Naive thymus-derived CD4-positive, alpha-beta T cell (primary cell): ENCODE measurements at regions of chr15 and their contacts with region 1.

Region 1: GRCh38 chr15:85707519-85708338 is 87.0 kb downstream of the KLHL25 start:
- DNase-seq: peak in 1 of 9 donors; percentile 57
- ATAC-seq: peak; percentile 35
- H3K4me3 ChIP-seq: peak overlapping the region; percentile 44
- H3K4me3 Mint-ChIP-seq: peak overlapping the region; percentile 77 to 93 (median 89)
- H3K27ac ChIP-seq: peak overlapping the region; percentile 84
- H3K27ac Mint-ChIP-seq: peak overlapping the region; percentile 94 to 100 (median 98)
- H3K4me1 ChIP-seq: peaks cover 50 to 66% of the 10 kb centered on the region in 2 donors
- H3K4me1 Mint-ChIP-seq: peaks cover 48 to 89% (median 84%) of the 10 kb centered on the region in 7 donors
- H3K27me3 ChIP-seq: no peaks in the 10 kb centered on the region
- H3K27me3 Mint-ChIP-seq: no peaks in the 10 kb centered on the region

Region 2: DNA sequence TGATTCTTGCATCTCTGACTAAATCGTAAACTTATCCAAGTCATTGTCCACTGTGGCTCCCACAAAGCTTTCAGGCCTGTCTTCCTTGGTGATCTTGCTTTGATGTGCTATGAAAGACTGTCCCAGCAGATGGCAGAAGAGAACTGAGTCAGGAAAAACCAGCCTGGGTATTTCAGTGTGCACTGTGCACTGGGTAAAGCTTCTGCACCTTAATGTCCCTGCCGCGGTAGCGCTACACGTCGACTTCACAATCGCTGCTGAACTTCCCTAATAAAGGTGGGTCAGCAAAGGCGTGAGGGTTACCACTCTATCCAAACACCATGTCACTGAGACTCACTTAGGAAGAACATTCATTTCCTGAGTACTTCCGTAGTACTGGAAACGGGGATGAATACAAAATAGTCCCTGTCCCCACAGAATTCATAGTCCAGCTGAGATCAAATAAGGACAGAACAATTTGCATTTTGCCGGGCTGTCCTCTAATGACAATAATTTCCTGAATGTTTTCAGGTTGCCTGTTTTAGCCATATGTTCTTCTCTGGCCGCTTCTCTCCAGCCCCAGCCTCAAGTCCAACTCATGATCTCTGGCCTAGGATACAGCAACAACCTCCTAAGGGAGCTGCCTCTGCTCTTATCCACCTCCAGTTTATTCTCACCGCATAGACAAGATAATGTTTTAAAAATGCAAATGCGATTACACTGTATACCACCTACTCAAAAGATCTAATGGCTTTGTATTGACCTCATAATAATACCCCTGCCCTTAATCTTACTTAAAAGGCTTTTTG is 410.9 kb before region 1 on chr15:
- CTCF ChIA-PET with region 1: no interaction called
- POLR2A ChIA-PET with region 1: no interaction called
- intact Hi-C with region 1: loop called in 1 of 2 experiments (anchors 5 kb)
- DNase-seq: peak; percentile 19 to 79 (median 71)
- ATAC-seq: peak; percentile 98
- H3K4me3 ChIP-seq: peak overlapping the region; percentile 20
- H3K4me3 Mint-ChIP-seq: peak overlapping the region; percentile 5 to 78 (median 60)
- H3K27ac ChIP-seq: no peak overlapping the region
- H3K27ac Mint-ChIP-seq: peak overlapping the region in 2 of 9 donors; percentile 12 to 62
- H3K4me1 ChIP-seq: no peaks in the 10 kb centered on the region
- H3K4me1 Mint-ChIP-seq: peaks cover 7 to 22% (median 14%) of the 10 kb centered on the region in 7 donors
- H3K27me3 ChIP-seq: no peaks in the 10 kb centered on the region
- H3K27me3 Mint-ChIP-seq: peaks cover 0 to 1% (median 0%) of the 10 kb centered on the region in 5 donors

Region 3: DNA sequence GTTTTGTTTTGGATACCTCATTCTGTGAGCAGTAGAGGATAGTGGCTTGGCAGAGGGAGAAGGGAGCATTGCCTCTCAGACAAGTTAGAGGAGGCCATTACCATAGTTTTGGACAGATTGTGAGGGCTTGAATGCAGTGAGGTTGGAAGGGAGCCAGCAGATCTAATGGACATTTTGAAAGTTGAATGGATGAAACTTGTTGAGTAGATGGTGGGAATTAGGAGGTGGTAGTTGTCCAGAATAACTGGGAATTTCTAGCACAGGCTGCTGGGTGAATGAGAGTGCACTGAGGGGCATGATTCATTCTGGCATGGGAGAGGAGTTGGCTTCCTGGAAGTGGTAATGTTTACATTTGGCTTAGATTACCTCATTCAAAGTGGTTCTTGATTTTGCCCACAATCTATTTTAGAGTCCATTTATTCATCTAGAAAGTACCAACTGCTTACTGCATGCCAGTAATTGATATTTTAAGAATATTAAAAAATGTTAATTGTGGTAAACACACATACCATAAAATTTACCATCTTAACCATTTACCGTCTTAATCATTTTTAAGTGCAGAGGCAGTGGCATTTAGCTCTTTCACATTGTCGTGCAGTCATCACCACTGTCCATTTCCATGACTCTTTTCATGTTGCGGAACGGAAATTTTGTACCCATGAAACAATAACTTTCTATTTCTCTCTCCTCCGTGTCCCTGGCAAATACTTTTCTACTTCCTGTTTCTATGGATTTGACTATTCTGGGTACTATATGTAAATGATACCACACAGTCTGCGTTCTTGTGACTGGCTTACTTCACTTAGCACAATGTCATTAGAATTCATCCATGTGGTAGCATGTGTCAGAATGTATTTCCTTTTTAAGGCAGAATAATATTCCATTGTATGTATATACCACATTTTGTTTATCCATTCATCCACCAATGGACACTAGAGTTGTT is 299.7 kb before region 1 on chr15:
- CTCF ChIA-PET with region 1: no interaction called
- POLR2A ChIA-PET with region 1: no interaction called
- intact Hi-C with region 1: loop called in 1 of 2 experiments (anchors 10 kb)
- DNase-seq: peak in 2 of 9 donors; percentile 23 to 27
- ATAC-seq: peak; percentile 81
- H3K4me3 ChIP-seq: no peak overlapping the region
- H3K4me3 Mint-ChIP-seq: peak overlapping the region; percentile 0 to 81 (median 46)
- H3K27ac ChIP-seq: no peak overlapping the region
- H3K27ac Mint-ChIP-seq: peak overlapping the region; percentile 8 to 92 (median 83)
- H3K4me1 ChIP-seq: peaks cover 24 to 40% of the 10 kb centered on the region in 2 donors
- H3K4me1 Mint-ChIP-seq: peaks cover 43 to 91% (median 73%) of the 10 kb centered on the region in 7 donors
- H3K27me3 ChIP-seq: no peaks in the 10 kb centered on the region
- H3K27me3 Mint-ChIP-seq: no peaks in the 10 kb centered on the region

Region 4: DNA sequence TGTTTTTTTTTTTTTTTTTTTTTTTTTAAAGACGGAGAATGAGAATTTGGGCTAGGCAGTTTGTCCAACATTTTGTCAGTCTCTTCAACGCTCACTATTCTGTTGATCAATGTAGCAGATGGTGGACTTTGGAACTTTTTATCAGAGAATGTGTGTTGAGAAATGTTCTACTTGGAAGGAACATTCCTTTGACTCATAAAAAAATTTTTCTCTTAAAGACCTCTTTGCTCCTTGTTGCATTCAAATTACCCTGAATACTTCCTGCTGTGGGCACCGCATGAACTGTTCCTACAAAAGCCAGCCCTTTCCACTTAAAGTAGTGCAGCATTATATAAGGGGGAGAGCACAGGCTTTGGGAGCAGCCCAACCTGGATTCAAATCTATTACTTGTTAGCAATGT is 144.4 kb before region 1 on chr15:
- CTCF ChIA-PET with region 1: no interaction called
- POLR2A ChIA-PET with region 1: no interaction called
- intact Hi-C with region 1: no loop called
- DNase-seq: no peak
- ATAC-seq: no peak
- H3K4me3 ChIP-seq: no peak overlapping the region
- H3K4me3 Mint-ChIP-seq: no peak overlapping the region
- H3K27ac ChIP-seq: no peak overlapping the region
- H3K27ac Mint-ChIP-seq: no peak overlapping the region
- H3K4me1 ChIP-seq: peaks cover 3 to 5% of the 10 kb centered on the region in 2 donors
- H3K4me1 Mint-ChIP-seq: peaks cover 9 to 33% (median 13%) of the 10 kb centered on the region in 7 donors
- H3K27me3 ChIP-seq: no peaks in the 10 kb centered on the region
- H3K27me3 Mint-ChIP-seq: no peaks in the 10 kb centered on the region

Region 5: GRCh38 chr15:85618956-85619491 is 88.7 kb before region 1 on chr15:
- CTCF ChIA-PET with region 1: no interaction called
- POLR2A ChIA-PET with region 1: no interaction called
- intact Hi-C with region 1: loop called in 1 of 2 experiments (anchors 1 kb)
- DNase-seq: peak in 6 of 9 donors; percentile 13 to 68 (median 24)
- ATAC-seq: peak; percentile 77
- H3K4me3 ChIP-seq: peak overlapping the region; percentile 3
- H3K4me3 Mint-ChIP-seq: no peak overlapping the region
- H3K27ac ChIP-seq: peak overlapping the region; percentile 6
- H3K27ac Mint-ChIP-seq: no peak overlapping the region
- H3K4me1 ChIP-seq: peaks cover 29 to 38% of the 10 kb centered on the region in 2 donors
- H3K4me1 Mint-ChIP-seq: peaks cover 14 to 41% (median 26%) of the 10 kb centered on the region in 7 donors
- H3K27me3 ChIP-seq: no peaks in the 10 kb centered on the region
- H3K27me3 Mint-ChIP-seq: no peaks in the 10 kb centered on the region

Region 6: GRCh38 chr15:85646538-85647091 is 61.1 kb before region 1 on chr15:
- CTCF ChIA-PET with region 1: no interaction called
- POLR2A ChIA-PET with region 1: interaction called, 4 read pairs
- intact Hi-C with region 1: loop called in 1 of 2 experiments (anchors 2 kb)
- DNase-seq: peak in 1 of 9 donors; percentile 35
- ATAC-seq: peak; percentile 78
- H3K4me3 ChIP-seq: no peak overlapping the region
- H3K4me3 Mint-ChIP-seq: peak overlapping the region in 2 of 10 donors; percentile 21 to 51
- H3K27ac ChIP-seq: no peak overlapping the region
- H3K27ac Mint-ChIP-seq: peak overlapping the region in 6 of 9 donors; percentile 10 to 81 (median 48)
- H3K4me1 ChIP-seq: peaks cover 8 to 35% of the 10 kb centered on the region in 2 donors
- H3K4me1 Mint-ChIP-seq: peaks cover 28 to 45% (median 38%) of the 10 kb centered on the region in 7 donors
- H3K27me3 ChIP-seq: no peaks in the 10 kb centered on the region
- H3K27me3 Mint-ChIP-seq: no peaks in the 10 kb centered on the region

Region 7: GRCh38 chr15:85689729-85690128 is 18.0 kb before region 1 on chr15:
- CTCF ChIA-PET with region 1: no interaction called
- POLR2A ChIA-PET with region 1: interaction called, 50 read pairs
- intact Hi-C with region 1: loop called (anchors 1 kb)
- DNase-seq: peak; percentile 44 to 78 (median 71)
- ATAC-seq: peak; percentile 85
- H3K4me3 ChIP-seq: peak overlapping the region; percentile 83
- H3K4me3 Mint-ChIP-seq: peak overlapping the region; percentile 90 to 99 (median 98)
- H3K27ac ChIP-seq: peak overlapping the region; percentile 88
- H3K27ac Mint-ChIP-seq: peak overlapping the region; percentile 92 to 99 (median 98)
- H3K4me1 ChIP-seq: peaks cover 45 to 49% of the 10 kb centered on the region in 2 donors
- H3K4me1 Mint-ChIP-seq: peaks cover 30 to 87% (median 76%) of the 10 kb centered on the region in 7 donors
- H3K27me3 ChIP-seq: no peaks in the 10 kb centered on the region
- H3K27me3 Mint-ChIP-seq: no peaks in the 10 kb centered on the region

Region 8: DNA sequence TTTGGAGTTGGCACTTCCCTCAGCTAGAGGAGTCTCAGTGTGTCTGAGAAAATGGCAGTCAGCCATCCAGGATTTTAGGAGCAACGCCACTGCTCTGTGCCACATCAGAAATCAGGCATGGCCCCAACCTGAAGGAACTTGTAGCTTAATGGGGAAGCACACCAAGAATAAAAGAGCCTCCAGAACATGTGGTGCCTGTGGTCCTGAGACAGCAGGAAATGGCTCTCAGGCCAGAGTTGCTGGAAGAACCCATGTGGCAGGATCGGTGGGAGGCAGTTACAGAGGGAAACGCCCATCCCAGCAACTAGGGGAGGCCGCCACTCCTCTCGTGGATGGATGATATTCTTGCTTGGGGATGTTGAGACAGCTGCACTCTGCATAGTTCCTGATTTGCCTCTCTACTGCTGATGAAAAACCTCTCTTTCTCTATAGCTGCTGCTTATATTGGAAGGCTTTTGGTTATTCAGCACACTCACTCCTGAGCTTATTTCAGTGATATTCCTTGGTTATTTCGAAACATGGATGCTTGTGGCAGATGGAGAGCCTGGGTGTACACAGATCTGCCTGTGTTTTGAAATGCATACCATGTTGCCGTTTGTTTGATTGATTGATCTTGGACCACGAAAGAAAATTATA is 34.6 kb after region 1 on chr15:
- CTCF ChIA-PET with region 1: no interaction called
- POLR2A ChIA-PET with region 1: no interaction called
- intact Hi-C with region 1: no loop called
- DNase-seq: no peak
- ATAC-seq: no peak
- H3K4me3 ChIP-seq: no peak overlapping the region
- H3K4me3 Mint-ChIP-seq: no peak overlapping the region
- H3K27ac ChIP-seq: no peak overlapping the region
- H3K27ac Mint-ChIP-seq: peak overlapping the region in 8 of 9 donors; percentile 9 to 81 (median 48)
- H3K4me1 ChIP-seq: no peaks in the 10 kb centered on the region
- H3K4me1 Mint-ChIP-seq: peaks cover 0 to 5% (median 0%) of the 10 kb centered on the region in 7 donors
- H3K27me3 ChIP-seq: no peaks in the 10 kb centered on the region
- H3K27me3 Mint-ChIP-seq: no peaks in the 10 kb centered on the region

Region 9: DNA sequence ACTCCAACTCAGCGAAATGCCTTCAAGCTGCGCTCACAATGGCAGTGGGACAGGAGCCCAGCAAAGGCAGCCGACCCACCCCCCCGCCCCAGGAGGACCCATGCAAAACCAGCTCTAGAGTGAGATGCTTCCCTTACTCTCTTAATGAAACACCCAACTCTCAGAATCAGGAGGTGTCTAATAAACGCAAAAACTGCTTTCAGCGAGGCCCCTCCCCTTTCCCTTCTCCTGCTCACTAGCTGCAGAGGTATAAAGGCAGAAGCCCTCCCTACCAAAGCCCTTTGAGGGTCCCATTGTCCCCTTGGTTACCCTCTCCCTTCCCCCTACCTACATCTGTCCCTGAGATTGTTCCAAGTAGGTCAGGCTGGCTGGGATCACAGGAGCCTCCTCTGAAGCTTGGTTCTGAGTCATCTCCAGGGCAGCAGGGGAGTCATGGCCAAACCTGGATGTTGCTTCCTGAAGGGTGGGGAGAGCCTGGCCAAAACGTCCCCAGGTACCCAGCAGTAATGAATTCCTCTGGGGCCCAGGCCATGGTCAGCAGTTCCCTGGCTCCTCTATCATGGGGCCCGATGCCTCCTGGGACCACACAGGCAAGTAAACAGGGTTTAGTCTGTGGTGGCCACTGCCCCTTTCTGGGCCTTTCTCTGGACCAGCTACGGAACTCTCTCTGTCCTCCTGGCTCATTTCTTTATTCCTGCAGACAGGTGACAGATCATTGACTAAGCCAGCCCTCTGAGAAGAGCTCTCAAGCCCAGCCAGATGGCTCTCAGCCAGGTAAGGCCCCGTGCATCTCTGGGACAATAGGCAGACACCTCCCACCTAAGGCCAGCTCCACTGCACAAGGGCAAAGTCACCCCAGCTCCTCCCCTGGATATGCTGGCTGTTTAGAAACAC is 78.4 kb after region 1 on chr15:
- CTCF ChIA-PET with region 1: no interaction called
- POLR2A ChIA-PET with region 1: no interaction called
- intact Hi-C with region 1: loop called in 1 of 2 experiments (anchors 2 kb)
- DNase-seq: peak in 1 of 9 donors; percentile 11
- ATAC-seq: peak; percentile 35
- H3K4me3 ChIP-seq: no peak overlapping the region
- H3K4me3 Mint-ChIP-seq: peak overlapping the region; percentile 73 to 87 (median 81)
- H3K27ac ChIP-seq: peak overlapping the region; percentile 61
- H3K27ac Mint-ChIP-seq: peak overlapping the region; percentile 83 to 96 (median 90)
- H3K4me1 ChIP-seq: peaks cover 21 to 27% of the 10 kb centered on the region in 2 donors
- H3K4me1 Mint-ChIP-seq: peaks cover 18 to 84% (median 62%) of the 10 kb centered on the region in 7 donors
- H3K27me3 ChIP-seq: no peaks in the 10 kb centered on the region
- H3K27me3 Mint-ChIP-seq: no peaks in the 10 kb centered on the region